GM12878 (cell line): ENCODE measurements at regions of chr10 and their contacts with region 1.

Region 1: DNA sequence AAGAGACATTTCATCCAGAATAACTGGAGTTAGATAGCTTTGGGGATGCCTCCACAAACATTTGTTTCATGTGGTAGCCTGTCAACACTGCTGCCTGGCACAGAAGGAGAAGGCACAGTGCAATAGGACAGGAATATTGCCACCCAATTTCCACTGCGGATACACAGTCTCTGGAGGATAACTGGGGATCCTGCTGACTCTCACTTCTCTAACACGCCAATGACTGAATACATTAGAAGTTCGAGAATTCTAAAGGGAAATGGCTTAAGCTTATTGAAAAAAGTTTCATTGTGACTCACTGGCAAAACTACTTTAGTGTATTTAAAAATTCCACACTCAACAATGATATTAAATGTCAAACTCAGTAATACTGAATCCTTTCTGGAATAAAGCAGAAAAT is 12.9 kb downstream of the ARL3 start:
- DNase-seq: no peak
- ATAC-seq: peak; percentile 65
- H3K4me3 ChIP-seq: no peak overlapping the region
- H3K27ac ChIP-seq: peak overlapping the region; percentile 24
- H3K4me1 ChIP-seq: peaks cover 6% of the 10 kb centered on the region
- H3K27me3 ChIP-seq: no peaks in the 10 kb centered on the region
- CTCF ChIP-seq: no peak
- EP300 ChIP-seq: no peak
- POLR2A ChIP-seq: no peak
- RAD21 ChIP-seq: no peak

Region 2: GRCh38 chr10:102559764-102560163 is 141.5 kb before region 1 on chr10:
- CTCF ChIA-PET with region 1: no interaction called
- POLR2A ChIA-PET with region 1: no interaction called
- RAD21 ChIA-PET with region 1: no interaction called
- SMC1A ChIA-PET with region 1: no interaction called
- in situ Hi-C with region 1: no loop called
- intact Hi-C with region 1: no loop called
- DNase-seq: no peak
- ATAC-seq: no peak
- H3K4me3 ChIP-seq: no peak overlapping the region
- H3K27ac ChIP-seq: no peak overlapping the region
- H3K4me1 ChIP-seq: peaks cover 21% of the 10 kb centered on the region
- H3K27me3 ChIP-seq: no peaks in the 10 kb centered on the region
- CTCF ChIP-seq: no peak
- EP300 ChIP-seq: no peak
- POLR2A ChIP-seq: no peak
- RAD21 ChIP-seq: no peak

Region 3: GRCh38 chr10:102720775-102721301 is 19.6 kb after region 1 on chr10:
- CTCF ChIA-PET with region 1: interaction called, 11 read pairs
- POLR2A ChIA-PET with region 1: no interaction called
- RAD21 ChIA-PET with region 1: no interaction called
- SMC1A ChIA-PET with region 1: interaction called, 12 read pairs
- in situ Hi-C with region 1: no loop called
- intact Hi-C with region 1: no loop called
- DNase-seq: no peak
- ATAC-seq: no peak
- H3K4me3 ChIP-seq: no peak overlapping the region
- H3K27ac ChIP-seq: no peak overlapping the region
- H3K4me1 ChIP-seq: peaks cover 5% of the 10 kb centered on the region; the same call in 1 of the 2 replicates
- H3K27me3 ChIP-seq: no peaks in the 10 kb centered on the region
- CTCF ChIP-seq: no peak
- EP300 ChIP-seq: no peak
- POLR2A ChIP-seq: no peak
- RAD21 ChIP-seq: no peak

Region 4: GRCh38 chr10:102841827-102842345 is 140.6 kb after region 1 on chr10:
- CTCF ChIA-PET with region 1: no interaction called
- POLR2A ChIA-PET with region 1: no interaction called
- RAD21 ChIA-PET with region 1: no interaction called
- SMC1A ChIA-PET with region 1: no interaction called
- in situ Hi-C with region 1: no loop called
- intact Hi-C with region 1: no loop called
- DNase-seq: no peak
- ATAC-seq: no peak
- H3K4me3 ChIP-seq: no peak overlapping the region
- H3K27ac ChIP-seq: no peak overlapping the region
- H3K4me1 ChIP-seq: no peaks in the 10 kb centered on the region
- H3K27me3 ChIP-seq: no peaks in the 10 kb centered on the region
- CTCF ChIP-seq: no peak
- EP300 ChIP-seq: no peak
- POLR2A ChIP-seq: no peak
- RAD21 ChIP-seq: no peak